ENCODE measurements at regions of chr1 and their contacts with region 1.

Region 1: GRCh38 chr1:7975212-7975865 is 13.8 kb downstream of the PARK7 start:
- DNase-seq: peak; percentile 64 to 92
- H3K4me3 ChIP-seq: no peak overlapping the region
- CTCF ChIP-seq: peak in 1 of 3 donors; percentile 84
- POLR2A ChIP-seq: no peak

Region 2: DNA sequence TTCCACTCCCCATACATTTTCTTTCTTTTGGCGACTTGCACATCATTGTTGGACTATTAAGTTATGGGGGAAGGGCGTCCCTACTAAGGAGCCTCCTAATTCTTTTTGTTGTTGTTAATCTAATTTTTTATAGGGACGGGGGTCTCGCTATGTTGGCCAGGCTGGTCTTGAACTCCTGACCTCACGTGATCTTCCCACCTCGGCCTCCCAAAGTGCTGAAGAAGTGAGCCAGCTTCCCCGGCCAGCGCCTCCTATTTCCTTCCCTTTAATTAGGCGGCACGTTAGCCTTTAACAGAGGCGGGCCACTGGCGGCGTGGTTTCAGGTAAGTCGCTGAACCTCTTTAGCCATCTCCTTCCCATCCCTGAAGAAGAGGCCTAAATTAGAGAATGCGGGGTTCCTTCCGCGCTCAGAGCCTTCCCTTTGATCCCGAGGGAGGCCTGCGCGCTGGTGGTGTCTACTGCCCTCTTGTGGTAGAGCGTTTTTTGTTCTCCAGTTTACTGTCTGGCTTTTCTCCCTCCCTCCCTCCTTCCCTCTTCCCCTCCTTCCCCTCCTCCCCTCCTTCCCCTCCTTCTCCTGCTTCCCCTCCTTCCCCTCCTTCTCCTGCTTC is 72.8 kb before region 1 on chr1:
- intact Hi-C with region 1: no loop called
- DNase-seq: peak; percentile 34 to 85
- H3K4me3 ChIP-seq: no peak overlapping the region
- CTCF ChIP-seq: peak in 1 of 3 donors; percentile 9
- POLR2A ChIP-seq: no peak

Region 3: DNA sequence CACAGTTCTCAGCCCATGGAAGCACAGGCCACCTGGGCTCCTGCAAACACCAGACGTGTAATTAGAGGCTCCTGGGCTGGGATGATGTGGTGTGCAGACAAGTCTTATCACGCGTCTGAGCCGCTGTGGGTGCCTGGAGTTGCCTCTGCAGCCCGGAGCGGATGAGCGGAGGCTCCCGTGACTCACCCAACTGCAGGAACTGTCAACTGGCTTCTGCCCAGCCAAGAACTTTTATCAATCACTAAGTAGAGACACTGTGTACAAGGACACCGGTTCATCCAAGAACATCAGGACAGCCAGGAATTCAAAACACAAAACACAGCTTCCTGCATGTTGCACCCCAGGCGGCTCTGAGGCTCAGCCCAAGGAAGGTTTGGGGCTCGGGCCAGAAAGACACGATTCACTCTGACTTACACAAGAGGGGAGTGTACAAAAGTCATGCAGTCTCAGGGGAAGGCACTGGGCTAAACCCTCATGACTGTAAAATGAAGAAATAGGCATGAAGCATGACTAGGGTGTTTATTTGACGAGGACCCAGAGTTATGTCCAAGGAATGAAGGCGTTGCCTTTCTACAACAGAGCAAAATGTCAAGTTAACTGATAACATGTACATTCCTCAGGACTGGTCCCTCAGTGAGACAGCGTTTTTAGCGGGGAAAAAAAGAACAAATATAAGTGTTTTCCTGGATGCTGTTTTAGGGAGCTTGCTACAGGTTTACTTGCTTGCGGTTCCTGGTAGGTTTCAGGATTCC is 29.6 kb after region 1 on chr1:
- intact Hi-C with region 1: no loop called
- DNase-seq: peak; percentile 97 to 98
- H3K4me3 ChIP-seq: no peak overlapping the region
- CTCF ChIP-seq: no peak
- POLR2A ChIP-seq: no peak

Region 4: DNA sequence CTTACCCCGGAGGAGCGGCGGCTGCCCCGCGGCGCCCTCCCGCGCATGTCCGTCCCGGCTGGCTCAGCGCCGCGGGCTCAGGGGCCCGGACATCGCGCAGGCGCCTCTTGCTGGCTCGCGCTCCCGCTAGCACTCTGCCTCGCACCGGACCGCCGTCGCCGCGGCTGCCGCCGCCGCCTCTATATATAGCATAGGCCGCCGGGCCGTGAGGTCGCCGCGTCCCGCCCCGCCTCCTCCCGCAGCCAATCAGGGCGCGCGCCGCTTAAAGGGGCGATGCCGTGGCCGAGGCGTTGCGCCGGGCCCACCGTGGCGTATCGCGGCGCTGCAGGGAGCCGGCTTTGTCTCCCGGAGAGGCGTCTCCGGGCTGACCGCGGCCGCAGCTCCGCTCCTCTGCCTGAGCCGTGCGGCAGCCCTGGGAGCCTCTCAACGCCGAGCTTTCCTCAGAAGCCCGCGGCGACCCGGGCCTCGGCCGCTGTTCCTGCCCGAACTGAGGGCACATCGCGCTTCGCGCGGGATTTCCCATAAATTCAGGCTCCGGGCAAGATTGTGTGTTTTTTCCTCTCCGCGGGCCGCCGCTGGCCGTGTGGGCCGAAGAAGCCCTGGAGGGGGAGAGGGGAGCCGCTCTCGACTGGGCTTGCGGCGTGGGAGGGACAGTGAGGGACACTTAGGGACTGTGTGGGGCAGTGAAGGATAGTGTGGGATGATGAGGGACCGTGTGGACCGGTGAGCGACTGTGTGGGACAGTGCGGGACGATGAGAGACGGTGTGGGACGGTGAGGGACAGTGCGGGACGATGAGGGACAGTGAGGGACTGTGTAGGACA is 51.0 kb after region 1 on chr1 and contains the start of gene ERRFI1:
- intact Hi-C with region 1: no loop called
- DNase-seq: peak; percentile 89 to 99
- H3K4me3 ChIP-seq: peak within 1 kb of the TSS; percentile 84
- CTCF ChIP-seq: no peak
- POLR2A ChIP-seq: peak in 1 of 2 donors; percentile 96
- total RNA-seq, gene ERRFI1: 93.6 to 566 (median 163) TPM

Region 5: GRCh38 chr1:8351693-8352470 is 376.5 kb after region 1 on chr1:
- intact Hi-C with region 1: loop called (anchors 2 kb)
- DNase-seq: no peak
- H3K4me3 ChIP-seq: no peak overlapping the region
- CTCF ChIP-seq: no peak
- POLR2A ChIP-seq: no peak